ENCODE measurements at regions of chr2 and their contacts with region 1.

Region 1: GRCh38 chr2:73926493-73927338 is at the start of gene DGUOK:
- DNase-seq: peak; percentile 98
- H3K4me3 Mint-ChIP-seq: peak within 1 kb of the TSS; percentile 89
- H3K27ac Mint-ChIP-seq: peak within 1 kb of the TSS; percentile 94
- H3K4me1 Mint-ChIP-seq: peaks cover 49% of the 10 kb centered on the region
- H3K27me3 Mint-ChIP-seq: no peaks in the 10 kb centered on the region
- total RNA-seq, gene DGUOK: 86.8 and 90.9 TPM in 2 replicates

Region 2: DNA sequence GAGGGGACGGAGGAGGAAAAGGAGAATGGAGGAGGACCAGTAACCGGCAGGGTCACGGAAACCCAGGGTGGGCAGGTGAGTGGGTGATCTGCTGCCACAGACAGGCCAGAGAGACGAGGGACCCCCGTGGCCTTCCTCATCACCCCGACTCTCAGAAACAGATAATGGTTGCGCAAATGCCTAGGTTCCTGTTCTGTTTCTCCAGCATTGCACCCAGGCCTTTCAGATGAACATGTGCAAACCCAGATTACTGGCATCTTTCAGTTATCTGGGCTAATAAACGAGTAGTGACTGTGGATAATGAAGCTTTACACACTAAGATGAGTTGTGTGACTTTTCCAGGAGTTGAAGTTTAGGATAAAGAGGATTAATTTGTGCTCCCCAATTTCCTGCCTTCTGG is 104.5 kb after region 1 on chr2:
- intact Hi-C with region 1: loop called (anchors 5 kb)
- DNase-seq: no peak
- H3K4me3 Mint-ChIP-seq: peak overlapping the region; percentile 42
- H3K27ac Mint-ChIP-seq: peak overlapping the region; percentile 63
- H3K4me1 Mint-ChIP-seq: peaks cover 63% of the 10 kb centered on the region
- H3K27me3 Mint-ChIP-seq: no peaks in the 10 kb centered on the region

Region 3: DNA sequence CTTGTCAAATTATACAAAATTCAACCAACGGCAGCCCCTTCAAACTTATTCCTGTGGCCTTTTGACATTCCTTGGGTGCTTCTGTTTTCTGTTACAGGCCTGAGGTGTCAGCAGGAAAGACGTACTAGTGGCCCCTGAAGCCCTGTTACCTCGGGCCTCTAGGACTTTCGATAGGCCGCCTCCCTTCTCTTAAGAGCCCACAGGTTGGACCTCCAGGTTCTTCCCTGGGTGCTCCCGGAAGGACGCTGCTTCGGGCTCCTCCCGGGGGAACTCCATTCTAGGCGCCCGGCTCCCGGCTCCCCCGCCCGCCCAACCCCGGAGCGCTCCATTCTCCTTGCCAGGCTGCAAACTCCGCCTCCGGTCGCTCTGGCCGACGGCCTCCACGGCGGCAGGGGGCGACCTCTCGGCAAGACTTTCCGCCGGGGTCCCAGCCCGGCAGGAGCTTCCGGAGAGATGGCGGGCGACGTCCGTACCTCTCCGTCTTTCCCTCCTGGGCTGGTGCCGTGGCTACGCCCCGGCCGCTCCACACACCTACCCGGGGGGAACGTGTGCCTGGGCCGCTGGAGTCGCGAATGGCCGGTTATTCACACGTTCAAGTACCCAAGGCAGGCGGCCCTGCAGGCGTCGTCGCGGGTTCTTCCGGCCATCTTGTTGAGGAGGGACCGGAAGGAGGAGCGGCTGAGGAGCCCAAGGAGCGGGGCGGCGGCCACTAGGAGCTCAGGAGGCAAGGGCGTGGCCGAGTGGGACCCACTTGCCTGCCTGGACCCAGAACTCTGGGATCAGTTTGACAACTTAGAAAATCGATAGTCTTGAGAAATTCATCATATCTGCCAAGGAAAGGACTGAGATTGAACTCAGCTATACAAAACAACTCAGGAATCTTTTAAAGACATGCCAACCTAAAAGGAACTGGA is 193.5 kb after region 1 on chr2:
- intact Hi-C with region 1: loop called (anchors 2 kb)
- DNase-seq: peak; percentile 82
- H3K4me3 Mint-ChIP-seq: peak overlapping the region; percentile 83
- H3K27ac Mint-ChIP-seq: peak overlapping the region; percentile 89
- H3K4me1 Mint-ChIP-seq: peaks cover 8% of the 10 kb centered on the region
- H3K27me3 Mint-ChIP-seq: peaks cover 8% of the 10 kb centered on the region

Measured in activated T-helper 2 cell treated with anti-CD3 and anti-CD28 coated beads, Interferon-gamma antibody, Interleukin-2, Interleukin-4, amounts not matched to agents 10 μg/mL and 5 μg/mL and 100 μg/mL, durations not matched to agents 14 hours and 24 hours and 36 hours (primary cell).